A549 (cell line): ENCODE measurements at regions of chr14 and their contacts with region 1.

Region 1: DNA sequence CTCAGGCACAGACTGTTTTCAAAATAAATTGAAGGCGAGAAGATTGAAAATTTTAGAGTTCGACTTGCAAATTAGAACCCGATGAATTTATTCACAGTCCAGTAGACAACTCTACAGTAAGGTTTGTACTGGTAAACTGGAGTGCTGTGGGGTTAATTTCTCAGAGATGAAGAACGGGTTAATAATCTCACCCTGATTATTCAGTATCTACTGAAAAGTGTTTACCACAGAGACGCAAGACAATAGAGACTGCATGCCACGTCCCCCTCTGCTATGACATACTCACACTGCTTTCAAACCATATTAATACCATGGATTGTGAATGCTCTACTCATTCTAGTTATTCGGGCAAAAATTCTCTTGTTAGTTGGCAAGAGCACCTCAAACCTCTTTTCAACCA is 36.1 kb downstream of the CFL2 start:
- DNase-seq: no peak
- ATAC-seq: peak in 1 of 2 experiments; percentile 44; a peak in 4 of 6 replicates
- H3K4me3 ChIP-seq: no peak overlapping the region
- H3K27ac ChIP-seq: peak overlapping the region; percentile 15 to 63; a peak in 5 of 6 replicates
- H3K4me1 ChIP-seq: peaks cover 24% of the 10 kb centered on the region
- CTCF ChIP-seq: no peak
- EP300 ChIP-seq: no peak
- POLR2A ChIP-seq: no peak
- RAD21 ChIP-seq: no peak

Region 2: GRCh38 chr14:34568803-34569202 is 109.5 kb before region 1 on chr14:
- CTCF ChIA-PET with region 1: no interaction called
- POLR2A ChIA-PET with region 1: no interaction called
- DNase-seq: no peak
- ATAC-seq: no peak
- H3K4me3 ChIP-seq: no peak overlapping the region
- H3K27ac ChIP-seq: no peak overlapping the region; a peak in 1 of 6 replicates
- H3K4me1 ChIP-seq: no peaks in the 10 kb centered on the region
- CTCF ChIP-seq: no peak
- EP300 ChIP-seq: no peak
- POLR2A ChIP-seq: no peak
- RAD21 ChIP-seq: no peak

Region 3: GRCh38 chr14:34693228-34693939 is 15.1 kb after region 1 on chr14:
- CTCF ChIA-PET with region 1: interaction called, 20 read pairs
- POLR2A ChIA-PET with region 1: interaction called, 3 read pairs
- DNase-seq: peak; percentile 68 to 83
- ATAC-seq: peak; percentile 97 to 98
- H3K4me3 ChIP-seq: peak overlapping the region; percentile 53
- H3K27ac ChIP-seq: peak overlapping the region; percentile 82 to 88
- H3K4me1 ChIP-seq: peaks cover 11% of the 10 kb centered on the region; the same call in 2 of the 3 replicates
- CTCF ChIP-seq: no peak
- EP300 ChIP-seq: no peak
- POLR2A ChIP-seq: peak; percentile 87
- RAD21 ChIP-seq: no peak

Region 4: DNA sequence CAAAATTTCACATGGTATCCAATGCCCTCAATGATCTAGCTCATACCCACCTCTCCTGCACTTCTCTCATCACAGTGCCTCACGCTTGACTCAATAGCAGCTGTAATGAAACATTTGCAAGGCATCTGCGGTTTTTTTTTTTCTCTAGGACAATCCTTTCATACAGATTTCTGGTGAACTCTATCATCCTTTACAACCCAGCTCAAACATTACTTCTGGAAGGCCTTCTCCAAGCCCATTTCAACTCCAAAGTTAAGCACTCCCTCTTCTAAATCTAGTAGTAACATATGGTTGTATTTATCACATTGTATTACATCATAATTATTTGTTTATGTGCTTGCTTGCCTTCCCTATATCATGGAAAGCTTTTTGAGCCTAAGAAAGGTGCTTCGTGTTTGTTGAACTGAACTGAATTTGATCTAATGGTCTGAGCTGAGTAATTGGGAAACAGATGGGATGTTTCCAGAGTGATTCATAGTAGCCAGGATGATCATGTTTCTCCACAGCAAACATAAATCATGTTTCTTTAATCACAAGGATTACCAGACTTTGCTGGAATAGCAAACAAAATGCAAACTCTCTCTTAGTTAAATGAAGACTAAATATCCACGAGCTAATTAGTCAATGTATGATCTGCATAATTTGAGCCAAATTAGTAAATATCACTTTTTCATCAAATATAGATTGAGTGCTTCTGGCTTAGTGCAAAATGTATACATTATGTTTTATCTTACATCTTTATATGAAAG is 21.7 kb after region 1 on chr14:
- CTCF ChIA-PET with region 1: interaction called, 13 read pairs
- POLR2A ChIA-PET with region 1: no interaction called
- DNase-seq: peak; percentile 65 to 90
- ATAC-seq: peak; percentile 93 to 97
- H3K4me3 ChIP-seq: peak overlapping the region; percentile 9; the same call in 1 of the 3 replicates
- H3K27ac ChIP-seq: peak overlapping the region; percentile 77 to 86
- H3K4me1 ChIP-seq: peaks cover 39% of the 10 kb centered on the region
- CTCF ChIP-seq: no peak
- EP300 ChIP-seq: peak in 1 of 2 experiments; percentile 76; a peak in 3 of 5 replicates
- POLR2A ChIP-seq: no peak
- RAD21 ChIP-seq: peak; percentile 5 to 26; a peak in 2 of 5 replicates